Caco-2 (cell line): ENCODE measurements at regions of chr7 and their contacts with region 1.

Region 1: DNA sequence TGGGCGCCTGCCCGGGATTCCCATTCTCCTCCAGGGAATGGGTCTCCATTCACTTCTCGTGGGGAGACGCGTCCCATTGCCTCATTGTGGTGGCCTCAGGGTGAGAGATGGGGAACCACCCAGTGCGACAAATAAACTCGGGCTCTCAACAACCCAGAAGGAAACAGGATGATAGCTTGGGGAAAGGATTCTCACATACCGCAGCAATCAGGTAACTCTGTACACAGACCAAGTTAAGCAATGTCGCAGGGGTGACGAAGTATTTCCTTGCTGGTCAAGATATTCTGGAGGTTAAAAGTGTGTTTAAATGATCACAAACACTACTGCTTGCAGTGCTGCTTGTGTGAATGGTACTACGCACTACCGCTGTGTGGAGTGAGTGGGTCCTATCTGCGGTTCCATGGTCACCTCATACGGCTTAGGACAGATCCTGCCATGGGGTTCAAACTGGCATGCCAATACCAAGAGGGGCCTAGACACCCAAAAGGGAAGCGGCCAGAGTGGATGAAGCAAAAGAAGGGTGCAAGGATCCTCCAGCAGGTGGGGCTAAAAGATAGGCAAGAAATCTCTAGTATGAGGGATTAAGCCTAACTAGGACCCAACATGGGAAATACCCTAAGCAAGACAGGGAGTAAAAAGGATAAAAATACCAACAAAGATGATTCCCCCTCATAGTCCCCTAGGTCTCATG is 143.8 kb upstream of the TMEM106B start:
- DNase-seq: peak; percentile 59 to 78
- H3K4me3 ChIP-seq: no peak overlapping the region
- H3K4me3 Mint-ChIP-seq: no peak overlapping the region
- H3K27ac Mint-ChIP-seq: peak overlapping the region; percentile 43
- H3K4me1 ChIP-seq: peaks cover 12% of the 10 kb centered on the region; the same call in 1 of the 2 replicates
- H3K4me1 Mint-ChIP-seq: peaks cover 13% of the 10 kb centered on the region
- H3K27me3 ChIP-seq: no peaks in the 10 kb centered on the region
- H3K27me3 Mint-ChIP-seq: no peaks in the 10 kb centered on the region
- CTCF ChIP-seq: peak; percentile 77 to 84

Region 2: GRCh38 chr7:11831736-11832495 is 235.4 kb before region 1 on chr7 and contains the start of gene THSD7A:
- CTCF ChIA-PET with region 1: no interaction called
- POLR2A ChIA-PET with region 1: no interaction called
- intact Hi-C with region 1: loop called (anchors 1 kb)
- DNase-seq: peak; percentile 31 to 67
- H3K4me3 ChIP-seq: peak within 1 kb of the TSS; percentile 33
- H3K4me3 Mint-ChIP-seq: peak within 1 kb of the TSS; percentile 71
- H3K27ac Mint-ChIP-seq: no peak within 1 kb of the TSS
- H3K4me1 ChIP-seq: peaks cover 7% of the 10 kb centered on the region
- H3K4me1 Mint-ChIP-seq: no peaks in the 10 kb centered on the region
- H3K27me3 ChIP-seq: no peaks in the 10 kb centered on the region; the same call in 1 of the 2 replicates
- H3K27me3 Mint-ChIP-seq: peaks cover 21% of the 10 kb centered on the region
- CTCF ChIP-seq: peak in 1 of 2 experiments; percentile 24
- total RNA-seq, gene THSD7A: 0.05 TPM in 2 replicates

Region 3: GRCh38 chr7:12052211-12052610 is 15.1 kb before region 1 on chr7:
- CTCF ChIA-PET with region 1: no interaction called
- POLR2A ChIA-PET with region 1: no interaction called
- intact Hi-C with region 1: no loop called
- DNase-seq: no peak
- H3K4me3 ChIP-seq: no peak overlapping the region
- H3K4me3 Mint-ChIP-seq: no peak overlapping the region
- H3K27ac Mint-ChIP-seq: no peak overlapping the region
- H3K4me1 ChIP-seq: no peaks in the 10 kb centered on the region
- H3K4me1 Mint-ChIP-seq: no peaks in the 10 kb centered on the region
- H3K27me3 ChIP-seq: no peaks in the 10 kb centered on the region
- H3K27me3 Mint-ChIP-seq: peaks cover 2% of the 10 kb centered on the region
- CTCF ChIP-seq: no peak

Region 4: DNA sequence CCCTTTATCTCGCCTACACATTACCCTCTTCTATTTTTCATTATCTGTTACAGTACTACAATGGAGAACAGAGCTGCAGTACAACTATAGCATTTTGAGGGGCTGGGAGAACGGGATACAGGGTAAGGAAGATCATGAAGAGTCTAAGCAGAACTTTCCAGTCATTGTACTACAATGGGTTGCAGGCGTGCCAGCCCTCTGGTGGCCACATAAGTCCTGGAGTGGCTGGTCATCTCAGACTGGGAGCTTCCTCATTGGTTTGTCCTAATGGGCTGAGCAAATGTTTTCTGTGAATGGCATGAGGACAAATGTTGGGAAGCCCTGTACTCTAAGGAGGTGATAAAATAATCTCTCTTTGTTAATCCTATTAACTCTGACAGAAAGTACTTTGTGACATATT is 176.8 kb after region 1 on chr7:
- CTCF ChIA-PET with region 1: no interaction called
- POLR2A ChIA-PET with region 1: no interaction called
- intact Hi-C with region 1: loop called (anchors 1 kb)
- DNase-seq: peak; percentile 69 to 71
- H3K4me3 ChIP-seq: no peak overlapping the region
- H3K4me3 Mint-ChIP-seq: no peak overlapping the region
- H3K27ac Mint-ChIP-seq: no peak overlapping the region
- H3K4me1 ChIP-seq: no peaks in the 10 kb centered on the region
- H3K4me1 Mint-ChIP-seq: no peaks in the 10 kb centered on the region
- H3K27me3 ChIP-seq: no peaks in the 10 kb centered on the region
- H3K27me3 Mint-ChIP-seq: no peaks in the 10 kb centered on the region
- CTCF ChIP-seq: peak; percentile 59 to 78

Region 5: GRCh38 chr7:12322284-12322902 is 255.1 kb after region 1 on chr7:
- CTCF ChIA-PET with region 1: interaction called, 3 read pairs
- POLR2A ChIA-PET with region 1: no interaction called
- intact Hi-C with region 1: loop called (anchors 1 kb)
- DNase-seq: peak in 1 of 2 experiments; percentile 10
- H3K4me3 ChIP-seq: no peak overlapping the region
- H3K4me3 Mint-ChIP-seq: no peak overlapping the region
- H3K27ac Mint-ChIP-seq: no peak overlapping the region
- H3K4me1 ChIP-seq: no peaks in the 10 kb centered on the region
- H3K4me1 Mint-ChIP-seq: no peaks in the 10 kb centered on the region
- H3K27me3 ChIP-seq: no peaks in the 10 kb centered on the region
- H3K27me3 Mint-ChIP-seq: no peaks in the 10 kb centered on the region
- CTCF ChIP-seq: peak; percentile 72 to 82

Region 6: GRCh38 chr7:12715372-12716133 is 648.3 kb after region 1 on chr7:
- CTCF ChIA-PET with region 1: no interaction called
- POLR2A ChIA-PET with region 1: no interaction called
- intact Hi-C with region 1: no loop called
- DNase-seq: peak; percentile 49 to 56
- H3K4me3 ChIP-seq: no peak overlapping the region
- H3K4me3 Mint-ChIP-seq: peak overlapping the region; percentile 51
- H3K27ac Mint-ChIP-seq: peak overlapping the region; percentile 81
- H3K4me1 ChIP-seq: peaks cover 12% of the 10 kb centered on the region
- H3K4me1 Mint-ChIP-seq: peaks cover 20% of the 10 kb centered on the region
- H3K27me3 ChIP-seq: no peaks in the 10 kb centered on the region
- H3K27me3 Mint-ChIP-seq: no peaks in the 10 kb centered on the region
- CTCF ChIP-seq: no peak